AG04449 (cell line): ENCODE measurements at regions of chr6 and their contacts with region 1.

Region 1: GRCh38 chr6:8006208-8006607 is 58.0 kb downstream of the BLOC1S5 start:
- DNase-seq: no peak
- H3K4me3 ChIP-seq: no peak overlapping the region
- CTCF ChIP-seq: peak; percentile 29

Region 2: GRCh38 chr6:7719364-7719850 is 286.8 kb before region 1 on chr6:
- CTCF ChIA-PET with region 1: interaction called, 328 read pairs
- POLR2A ChIA-PET with region 1: no interaction called
- DNase-seq: no peak
- H3K4me3 ChIP-seq: no peak overlapping the region
- CTCF ChIP-seq: no peak

Region 3: DNA sequence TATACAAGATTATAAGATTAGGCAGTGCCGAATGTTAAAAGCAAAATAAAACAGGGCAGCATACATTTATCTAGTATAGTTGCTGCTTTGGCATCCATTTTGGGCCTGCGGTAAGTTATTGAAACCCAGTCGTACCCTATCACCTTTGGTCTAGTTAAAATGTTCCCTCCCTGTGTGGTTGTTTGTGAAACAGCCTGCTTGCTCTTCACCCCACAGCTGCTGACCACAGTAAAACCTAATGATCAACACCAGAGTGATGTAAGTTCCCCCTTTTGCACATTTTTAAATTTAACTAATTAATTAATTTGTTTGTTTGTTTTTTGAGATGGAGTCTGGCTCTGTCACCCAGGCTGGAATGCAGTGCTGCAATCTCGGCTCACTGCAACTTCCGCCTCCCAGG is 45.4 kb before region 1 on chr6:
- CTCF ChIA-PET with region 1: no interaction called
- POLR2A ChIA-PET with region 1: no interaction called
- DNase-seq: no peak
- H3K4me3 ChIP-seq: no peak overlapping the region
- CTCF ChIP-seq: no peak

Region 4: DNA sequence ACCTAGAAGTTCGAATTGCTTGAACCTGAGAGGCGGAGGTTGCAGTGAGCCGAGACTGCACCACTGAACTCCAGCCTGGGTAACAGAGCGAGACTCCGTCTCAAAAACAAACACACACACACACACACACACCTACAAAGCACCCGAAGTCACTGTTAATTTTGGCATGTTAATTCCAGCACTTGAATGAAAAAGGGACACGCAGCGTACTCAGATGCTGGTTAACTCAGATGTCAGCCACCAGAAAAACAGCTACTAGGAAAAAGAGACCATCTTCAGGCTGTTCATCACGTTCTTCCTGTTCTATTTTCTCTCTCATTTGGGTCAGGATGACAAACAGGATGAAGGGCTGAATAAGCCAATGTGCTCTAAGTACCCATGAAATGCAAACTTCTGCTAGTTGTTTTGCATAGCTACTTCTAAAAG is 11.1 kb after region 1 on chr6:
- CTCF ChIA-PET with region 1: interaction called, 29 read pairs
- POLR2A ChIA-PET with region 1: no interaction called
- DNase-seq: no peak
- H3K4me3 ChIP-seq: no peak overlapping the region
- CTCF ChIP-seq: no peak

Region 5: DNA sequence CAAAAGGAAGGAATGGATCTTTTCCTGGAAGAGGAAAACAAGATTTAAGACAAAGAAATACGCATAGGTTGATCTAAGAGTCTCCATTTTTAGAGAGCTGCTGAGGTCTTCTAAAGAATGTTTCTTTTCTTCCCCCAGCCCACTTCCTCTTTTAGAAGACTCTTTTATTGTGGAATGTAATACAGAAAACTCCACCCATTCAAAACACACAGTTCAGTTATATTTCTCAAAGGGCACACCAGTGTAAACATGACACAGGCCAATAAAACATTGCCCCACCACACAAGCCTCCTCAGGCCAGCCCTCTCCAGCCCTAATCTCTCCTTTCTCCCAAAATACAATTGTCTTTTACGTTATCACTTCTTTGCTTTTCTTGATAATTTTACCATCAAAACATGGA is 386.4 kb after region 1 on chr6:
- CTCF ChIA-PET with region 1: no interaction called
- POLR2A ChIA-PET with region 1: no interaction called
- DNase-seq: no peak
- H3K4me3 ChIP-seq: no peak overlapping the region
- CTCF ChIP-seq: no peak

Region 6: DNA sequence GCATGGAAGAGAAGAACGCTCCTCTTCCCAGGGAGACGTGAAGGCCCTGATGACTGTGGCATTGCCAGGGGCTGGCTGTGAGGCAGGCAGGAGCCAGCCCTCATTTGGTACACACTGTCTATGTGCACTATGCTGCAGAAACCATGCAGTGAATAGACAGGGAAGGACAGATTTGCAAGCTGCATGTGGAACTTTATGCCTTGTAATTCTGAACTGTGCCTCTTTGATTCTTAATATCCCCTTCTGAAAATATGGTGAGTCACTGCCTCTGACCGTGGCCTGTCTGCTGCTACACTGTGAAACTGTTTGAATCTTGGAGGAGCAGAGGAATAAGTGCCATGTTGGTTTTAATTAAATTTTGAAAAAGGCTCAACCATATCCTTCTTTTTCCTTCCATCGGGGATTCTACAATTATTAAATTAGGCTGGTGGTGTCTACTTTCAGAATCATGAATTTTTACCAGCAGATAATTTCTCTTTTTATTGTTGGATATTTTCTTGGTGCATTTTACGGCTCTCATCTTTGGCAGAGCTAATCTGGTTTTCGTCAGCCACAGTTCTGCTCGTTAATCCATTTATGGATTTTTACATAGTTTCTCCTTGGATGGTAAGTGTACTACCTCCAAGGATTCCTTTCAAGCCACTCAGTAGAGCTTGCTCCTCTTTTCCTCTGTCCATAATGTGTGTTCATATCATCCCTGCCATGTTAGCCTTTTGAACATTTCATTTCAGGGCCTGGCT is 730.1 kb after region 1 on chr6:
- CTCF ChIA-PET with region 1: no interaction called
- POLR2A ChIA-PET with region 1: no interaction called
- DNase-seq: no peak
- H3K4me3 ChIP-seq: no peak overlapping the region
- CTCF ChIP-seq: no peak